AG04450 (cell line): ENCODE measurements at regions of chr11 and their contacts with region 1.

Region 1: GRCh38 chr11:78045851-78046485 is 17.7 kb upstream of the THRSP start:
- DNase-seq: no peak
- H3K4me3 ChIP-seq: peak overlapping the region; percentile 60
- H3K27ac ChIP-seq: peak overlapping the region; percentile 57
- H3K27me3 ChIP-seq: no peaks in the 10 kb centered on the region
- CTCF ChIP-seq: peak; percentile 95

Region 2: DNA sequence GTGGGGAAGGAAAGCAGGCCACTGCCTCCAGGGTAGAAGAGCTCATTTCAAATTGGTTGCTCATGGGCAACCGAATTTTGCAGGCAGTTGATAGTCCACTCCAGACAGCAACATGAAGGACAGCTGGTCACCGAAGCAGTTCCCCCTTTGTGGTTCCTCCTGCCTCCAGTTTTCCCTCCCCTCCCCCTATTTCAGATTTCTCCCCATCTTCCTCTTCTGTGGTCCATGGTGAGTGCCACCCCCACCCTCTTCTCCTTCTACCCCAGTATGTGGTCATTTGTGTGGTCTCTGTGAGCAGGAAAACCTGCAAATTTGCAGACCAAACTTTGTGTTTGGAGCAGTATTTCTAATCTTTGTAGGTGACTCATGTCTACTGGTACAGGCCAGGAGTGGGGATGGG is 533.9 kb before region 1 on chr11:
- CTCF ChIA-PET with region 1: interaction called, 11 read pairs
- POLR2A ChIA-PET with region 1: no interaction called
- DNase-seq: no peak
- H3K4me3 ChIP-seq: no peak overlapping the region
- H3K27ac ChIP-seq: no peak overlapping the region
- H3K27me3 ChIP-seq: peaks cover 1% of the 10 kb centered on the region
- CTCF ChIP-seq: no peak

Region 3: GRCh38 chr11:77801477-77801876 is 244.5 kb before region 1 on chr11:
- CTCF ChIA-PET with region 1: no interaction called
- POLR2A ChIA-PET with region 1: no interaction called
- DNase-seq: no peak
- H3K4me3 ChIP-seq: no peak overlapping the region
- H3K27ac ChIP-seq: no peak overlapping the region
- H3K27me3 ChIP-seq: no peaks in the 10 kb centered on the region
- CTCF ChIP-seq: no peak

Region 4: DNA sequence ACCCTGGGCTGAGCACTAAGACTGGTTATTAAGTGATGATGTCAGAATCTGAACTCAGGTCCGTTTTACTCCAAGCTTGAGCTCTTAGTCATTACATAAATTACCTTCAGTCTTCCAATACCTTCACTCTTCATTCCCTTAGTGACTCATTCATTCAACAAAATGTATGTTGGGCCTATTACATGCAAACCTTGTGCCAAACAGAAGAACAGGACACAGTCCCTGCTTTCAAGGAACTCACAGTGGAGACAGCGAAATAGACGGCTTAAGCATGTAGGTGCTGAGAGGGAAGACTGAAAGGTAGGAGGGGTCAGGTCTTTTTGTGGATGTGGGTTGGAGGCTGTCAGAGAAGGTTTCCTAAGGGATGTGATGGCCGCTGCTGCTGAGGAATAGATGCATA is 26.1 kb before region 1 on chr11:
- CTCF ChIA-PET with region 1: interaction called, 14 read pairs
- POLR2A ChIA-PET with region 1: no interaction called
- DNase-seq: no peak
- H3K4me3 ChIP-seq: no peak overlapping the region
- H3K27ac ChIP-seq: no peak overlapping the region
- H3K27me3 ChIP-seq: no peaks in the 10 kb centered on the region
- CTCF ChIP-seq: no peak

Region 5: DNA sequence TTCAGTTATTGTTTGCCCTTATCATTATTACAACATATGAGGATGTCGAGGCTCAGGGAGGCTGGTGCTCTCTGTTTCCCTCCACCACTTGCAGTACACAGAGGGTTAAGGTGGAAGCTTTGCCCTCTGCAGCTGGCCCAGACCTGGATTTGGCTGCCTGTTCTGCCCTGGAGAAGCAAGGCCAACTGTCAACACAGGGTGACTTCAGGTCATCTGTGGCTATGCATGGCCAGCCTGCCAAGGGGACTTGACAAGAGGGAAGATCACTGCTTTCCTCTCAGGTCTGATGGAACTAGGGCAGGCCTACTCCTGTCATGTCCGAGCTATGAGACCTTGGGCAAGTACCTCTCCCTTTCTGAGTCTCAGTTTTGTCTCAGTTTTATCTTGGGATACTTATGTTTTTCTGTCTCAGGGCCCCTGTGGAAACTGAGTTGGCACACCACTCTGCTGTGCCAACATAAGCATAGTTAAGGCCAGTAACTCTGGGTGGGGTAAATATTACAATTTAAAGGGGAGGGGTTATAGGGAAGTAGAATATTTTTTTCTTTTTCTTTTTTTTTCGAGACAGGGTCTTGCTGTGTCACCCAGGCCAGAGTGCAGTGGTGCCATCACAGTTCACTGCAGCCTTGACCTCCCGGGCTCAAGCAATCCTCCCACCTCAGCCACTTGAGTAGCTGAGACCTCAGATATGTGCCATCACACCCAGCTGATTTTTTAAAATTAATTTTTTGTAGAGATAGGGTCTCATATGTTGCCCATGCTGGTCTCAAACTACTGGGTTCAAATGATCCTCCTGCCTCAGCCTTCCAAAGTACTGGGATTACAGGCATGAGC is 15.3 kb after region 1 on chr11:
- CTCF ChIA-PET with region 1: interaction called, 15 read pairs
- POLR2A ChIA-PET with region 1: no interaction called
- DNase-seq: no peak
- H3K4me3 ChIP-seq: no peak overlapping the region
- H3K27ac ChIP-seq: no peak overlapping the region
- H3K27me3 ChIP-seq: no peaks in the 10 kb centered on the region
- CTCF ChIP-seq: no peak

Region 6: GRCh38 chr11:78079232-78080083 is 33.5 kb after region 1 on chr11 and contains the start of gene NDUFC2:
- CTCF ChIA-PET with region 1: interaction called, 10 read pairs
- POLR2A ChIA-PET with region 1: no interaction called
- DNase-seq: peak; percentile 57
- H3K4me3 ChIP-seq: peak within 1 kb of the TSS; percentile 86
- H3K27ac ChIP-seq: peak within 1 kb of the TSS; percentile 77
- H3K27me3 ChIP-seq: no peaks in the 10 kb centered on the region
- CTCF ChIP-seq: no peak; the same call in 1 of the 2 replicates
- polyA plus RNA-seq, gene NDUFC2: 128 and 136 TPM in 2 replicates

Region 7: GRCh38 chr11:78188286-78189173 is 142.6 kb after region 1 on chr11 and contains the starts of genes KCTD21 and USP35:
- CTCF ChIA-PET with region 1: no interaction called
- POLR2A ChIA-PET with region 1: no interaction called
- DNase-seq: peak; percentile 91
- H3K4me3 ChIP-seq: peak within 1 kb of the TSS; percentile 82
- H3K27ac ChIP-seq: peak within 1 kb of the TSS; percentile 22
- H3K27me3 ChIP-seq: no peaks in the 10 kb centered on the region
- CTCF ChIP-seq: no peak
- polyA plus RNA-seq, gene KCTD21: 18.4 and 19.7 TPM in 2 replicates
- polyA plus RNA-seq, gene USP35: 5.5 and 6.0 TPM in 2 replicates